ENCODE measurements at regions of chr16 and their contacts with region 1.

Region 1: DNA sequence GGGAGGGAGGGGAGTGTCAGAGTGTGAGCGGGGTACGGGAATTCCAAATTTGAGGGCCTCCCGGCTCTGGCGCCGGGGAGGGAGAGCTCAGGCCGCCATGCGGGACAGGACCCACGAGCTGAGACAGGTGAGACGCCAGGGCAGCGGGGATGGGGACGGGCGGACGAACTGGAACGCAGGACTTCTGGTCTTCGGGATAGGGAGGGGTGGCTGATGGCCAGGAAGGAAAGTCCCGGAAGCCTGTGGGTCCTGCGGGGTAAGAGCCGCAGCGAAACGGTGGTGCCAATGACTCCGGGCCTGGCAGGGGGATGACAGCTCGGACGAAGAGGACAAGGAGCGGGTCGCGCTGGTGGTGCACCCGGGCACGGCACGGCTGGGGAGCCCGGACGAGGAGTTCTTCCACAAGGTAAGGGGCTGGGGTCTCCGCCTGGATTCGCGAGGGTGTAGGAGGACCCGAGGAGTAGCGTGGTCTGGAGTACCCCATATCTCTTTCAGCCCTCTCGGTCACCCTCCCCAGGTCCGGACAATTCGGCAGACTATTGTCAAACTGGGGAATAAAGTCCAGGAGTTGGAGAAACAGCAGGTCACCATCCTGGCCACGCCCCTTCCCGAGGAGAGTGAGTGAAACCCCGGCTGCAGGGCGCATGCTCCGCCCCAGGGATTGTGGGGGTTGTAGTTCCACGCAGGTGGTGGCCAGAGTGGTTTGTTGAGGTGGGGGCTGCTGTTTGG is 515 bp downstream of the STX4 start:
- DNase-seq: peak; percentile 90
- H3K4me3 ChIP-seq: peak overlapping the region; percentile 77
- H3K27ac ChIP-seq: peak overlapping the region; percentile 83
- H3K4me1 ChIP-seq: peaks cover 7% of the 10 kb centered on the region
- H3K27me3 ChIP-seq: no peaks in the 10 kb centered on the region
- CTCF ChIP-seq: no peak

Region 2: DNA sequence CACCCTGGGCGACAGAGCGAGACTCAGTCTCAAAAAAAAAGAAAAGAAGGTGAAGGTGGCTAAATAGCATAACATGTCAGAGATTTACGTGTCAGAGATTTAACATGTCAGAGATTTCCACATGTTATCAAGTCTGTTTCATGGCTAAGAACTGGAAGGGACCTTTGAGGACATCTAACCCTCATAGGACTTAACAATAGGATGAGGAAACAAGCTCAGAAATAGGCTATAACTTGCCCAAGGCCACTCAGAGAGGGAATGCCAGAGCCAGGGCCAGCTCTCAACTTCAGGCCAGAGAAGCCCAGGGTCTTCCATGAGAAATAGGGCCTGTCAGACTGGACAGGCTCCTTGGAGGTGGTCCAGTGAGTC is 220.1 kb before region 1 on chr16:
- CTCF ChIA-PET with region 1: no interaction called
- POLR2A ChIA-PET with region 1: no interaction called
- intact Hi-C with region 1: no loop called
- DNase-seq: no peak
- H3K4me3 ChIP-seq: peak overlapping the region; percentile 53
- H3K27ac ChIP-seq: peak overlapping the region; percentile 64
- H3K4me1 ChIP-seq: peaks cover 5% of the 10 kb centered on the region
- H3K27me3 ChIP-seq: no peaks in the 10 kb centered on the region
- CTCF ChIP-seq: no peak

Region 3: DNA sequence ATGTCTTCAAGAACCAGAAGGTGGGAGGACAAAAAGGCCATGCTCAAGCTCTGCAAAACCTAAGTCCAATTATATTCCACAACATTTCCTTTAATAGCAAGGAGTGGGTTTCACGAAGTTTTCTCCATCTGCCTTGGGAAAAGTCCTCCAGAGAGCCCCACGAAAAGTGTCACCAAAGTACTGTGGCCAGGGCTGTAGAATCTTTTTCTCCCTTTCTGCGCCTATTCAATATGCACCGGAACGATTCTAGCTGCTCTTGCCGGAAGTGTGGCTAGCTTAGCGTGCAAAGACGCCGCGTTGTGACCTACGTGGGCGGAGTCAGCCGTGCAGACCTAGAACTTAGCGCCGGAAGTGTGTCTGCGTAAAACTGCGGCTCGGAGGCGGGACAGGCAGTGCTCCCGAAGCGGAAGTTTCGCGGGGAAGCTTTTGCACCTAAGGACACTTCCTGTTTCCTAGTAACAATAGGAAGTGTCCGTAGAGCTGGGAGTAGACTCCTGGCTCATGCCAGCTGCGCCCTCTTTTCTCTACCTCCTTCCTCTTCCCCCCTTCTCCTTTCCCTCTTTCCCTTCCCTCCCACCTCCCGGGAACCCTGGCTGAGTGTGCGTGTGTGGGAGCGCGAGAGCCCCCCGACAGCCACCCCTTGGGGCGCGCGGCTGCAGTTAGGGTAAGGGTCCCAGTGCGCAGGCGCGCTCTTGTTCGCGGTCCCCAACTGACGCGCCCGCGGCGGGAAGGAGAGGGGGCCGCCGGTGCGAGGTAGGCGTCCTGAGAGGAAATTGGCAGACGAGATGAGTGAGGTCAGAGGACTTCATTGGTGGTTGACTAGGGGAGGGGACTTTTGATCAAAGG is 40.3 kb after region 1 on chr16 and contains the starts of genes ZNF646 and ZNF668:
- CTCF ChIA-PET with region 1: no interaction called
- POLR2A ChIA-PET with region 1: no interaction called
- intact Hi-C with region 1: loop called (anchors 1 kb)
- DNase-seq: peak; percentile 100
- H3K4me3 ChIP-seq: peak within 1 kb of the TSS; percentile 89
- H3K27ac ChIP-seq: peak within 1 kb of the TSS; percentile 99
- H3K4me1 ChIP-seq: peaks cover 19% of the 10 kb centered on the region
- H3K27me3 ChIP-seq: no peaks in the 10 kb centered on the region
- CTCF ChIP-seq: no peak
- total RNA-seq, gene ZNF646: 26.6 and 27.9 TPM in 2 replicates
- total RNA-seq, gene ZNF668: 16.5 and 19.8 TPM in 2 replicates

Measured in A673 (cell line).